PC-9 (cell line): ENCODE measurements at regions of chr5 and their contacts with region 1.

Region 1: GRCh38 chr5:106435185-106435584 is 1235.6 kb downstream of the EFNA5 start:
- DNase-seq: no peak
- H3K4me3 ChIP-seq: no peak overlapping the region
- H3K27ac ChIP-seq: no peak overlapping the region
- H3K4me1 ChIP-seq: no peaks in the 10 kb centered on the region
- H3K27me3 ChIP-seq: no peaks in the 10 kb centered on the region
- CTCF ChIP-seq: no peak

Region 2: DNA sequence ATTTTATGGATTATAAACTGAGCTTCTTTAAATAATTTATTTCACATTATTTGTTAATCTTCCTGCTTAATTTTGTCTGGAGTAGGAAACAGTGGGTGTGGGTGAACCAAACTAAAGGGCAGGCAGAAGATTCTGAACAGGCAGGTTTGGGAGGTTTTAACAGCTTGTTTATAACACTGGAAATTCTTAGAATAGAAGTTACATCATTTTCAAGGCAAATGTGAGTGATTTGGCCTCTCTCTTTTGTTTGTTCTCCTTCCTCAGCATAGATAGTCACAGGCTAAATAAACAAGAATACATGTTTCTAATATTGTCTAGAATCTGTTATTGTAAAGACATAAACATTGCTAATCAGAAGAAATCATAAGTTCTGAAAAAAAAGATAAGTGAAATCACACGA is 1901.7 kb before region 1 on chr5:
- CTCF ChIA-PET with region 1: interaction called, 14 read pairs
- POLR2A ChIA-PET with region 1: no interaction called
- intact Hi-C with region 1: no loop called
- DNase-seq: peak in 1 of 2 experiments; percentile 49
- H3K4me3 ChIP-seq: no peak overlapping the region
- H3K27ac ChIP-seq: peak overlapping the region; percentile 55
- H3K4me1 ChIP-seq: peaks cover 17% of the 10 kb centered on the region
- H3K27me3 ChIP-seq: no peaks in the 10 kb centered on the region
- CTCF ChIP-seq: no peak

Region 3: DNA sequence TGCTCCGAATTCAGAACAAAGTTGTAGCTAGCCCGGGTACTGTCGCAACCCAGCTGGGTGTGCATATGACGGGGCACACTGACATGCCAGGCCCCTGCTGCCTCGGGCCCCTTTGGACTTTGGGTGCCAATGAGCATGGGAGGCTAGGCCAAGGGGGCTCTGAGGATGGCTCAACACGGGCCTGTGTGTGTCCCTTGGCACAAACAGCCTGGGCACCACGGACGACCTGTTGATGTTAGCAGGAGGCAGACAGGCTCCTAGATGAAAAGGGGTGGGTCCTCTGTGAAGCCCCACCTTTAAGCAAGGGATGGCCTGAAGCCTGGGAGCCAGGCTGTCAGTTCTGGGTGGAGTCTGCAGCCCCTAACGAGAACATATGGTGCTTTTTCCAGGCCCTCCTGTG is 452.7 kb before region 1 on chr5:
- CTCF ChIA-PET with region 1: no interaction called
- POLR2A ChIA-PET with region 1: no interaction called
- intact Hi-C with region 1: no loop called
- DNase-seq: no peak
- H3K4me3 ChIP-seq: no peak overlapping the region
- H3K27ac ChIP-seq: no peak overlapping the region
- H3K4me1 ChIP-seq: 0 out of 2 replicates have a peak, but pooled peaks cover 5% of the 10 kb centered on the region
- H3K27me3 ChIP-seq: no peaks in the 10 kb centered on the region
- CTCF ChIP-seq: no peak

Region 4: DNA sequence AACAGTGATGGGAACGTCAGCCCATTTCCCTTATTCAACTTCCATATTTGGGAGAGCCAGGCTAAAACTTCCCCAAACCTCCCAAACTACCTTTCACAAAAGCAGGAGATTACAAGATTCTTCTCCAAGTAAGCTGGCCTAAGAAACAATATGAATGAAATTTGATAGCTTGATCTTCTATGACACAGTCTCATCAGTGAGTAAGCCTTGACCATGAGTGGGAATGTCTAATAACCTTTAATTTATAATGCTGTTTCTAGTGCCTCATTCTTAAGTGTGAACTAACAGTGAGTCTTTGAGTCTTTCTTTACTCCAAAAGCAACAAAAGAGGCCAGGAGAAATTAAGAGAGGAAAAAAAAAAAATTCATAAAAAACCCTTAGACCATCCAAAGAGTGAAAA is 144.3 kb before region 1 on chr5:
- CTCF ChIA-PET with region 1: no interaction called
- POLR2A ChIA-PET with region 1: no interaction called
- intact Hi-C with region 1: no loop called
- DNase-seq: no peak
- H3K4me3 ChIP-seq: no peak overlapping the region
- H3K27ac ChIP-seq: no peak overlapping the region
- H3K4me1 ChIP-seq: no peaks in the 10 kb centered on the region
- H3K27me3 ChIP-seq: no peaks in the 10 kb centered on the region
- CTCF ChIP-seq: no peak

Region 5: DNA sequence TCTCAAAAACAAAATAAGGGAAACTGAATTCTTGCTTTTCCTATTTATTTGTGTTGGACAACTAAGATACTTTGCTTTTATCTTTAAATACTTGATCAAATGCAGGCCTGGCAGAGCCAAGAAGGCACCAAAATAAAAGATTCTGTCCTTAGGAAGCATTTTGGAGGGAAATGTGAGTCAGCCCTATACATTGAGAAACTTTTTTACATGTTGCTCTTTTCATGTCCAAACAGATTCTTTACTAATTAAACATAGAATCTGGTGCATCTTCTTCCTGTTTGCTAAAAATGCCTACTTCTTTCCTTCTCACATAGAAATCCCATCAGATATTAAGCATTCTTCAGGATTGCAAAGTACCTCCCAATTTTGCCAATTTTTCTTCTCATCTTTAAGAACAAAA is 75.1 kb after region 1 on chr5:
- CTCF ChIA-PET with region 1: no interaction called
- POLR2A ChIA-PET with region 1: no interaction called
- intact Hi-C with region 1: no loop called
- DNase-seq: no peak
- H3K4me3 ChIP-seq: no peak overlapping the region
- H3K27ac ChIP-seq: no peak overlapping the region
- H3K4me1 ChIP-seq: no peaks in the 10 kb centered on the region
- H3K27me3 ChIP-seq: no peaks in the 10 kb centered on the region
- CTCF ChIP-seq: no peak

Region 6: DNA sequence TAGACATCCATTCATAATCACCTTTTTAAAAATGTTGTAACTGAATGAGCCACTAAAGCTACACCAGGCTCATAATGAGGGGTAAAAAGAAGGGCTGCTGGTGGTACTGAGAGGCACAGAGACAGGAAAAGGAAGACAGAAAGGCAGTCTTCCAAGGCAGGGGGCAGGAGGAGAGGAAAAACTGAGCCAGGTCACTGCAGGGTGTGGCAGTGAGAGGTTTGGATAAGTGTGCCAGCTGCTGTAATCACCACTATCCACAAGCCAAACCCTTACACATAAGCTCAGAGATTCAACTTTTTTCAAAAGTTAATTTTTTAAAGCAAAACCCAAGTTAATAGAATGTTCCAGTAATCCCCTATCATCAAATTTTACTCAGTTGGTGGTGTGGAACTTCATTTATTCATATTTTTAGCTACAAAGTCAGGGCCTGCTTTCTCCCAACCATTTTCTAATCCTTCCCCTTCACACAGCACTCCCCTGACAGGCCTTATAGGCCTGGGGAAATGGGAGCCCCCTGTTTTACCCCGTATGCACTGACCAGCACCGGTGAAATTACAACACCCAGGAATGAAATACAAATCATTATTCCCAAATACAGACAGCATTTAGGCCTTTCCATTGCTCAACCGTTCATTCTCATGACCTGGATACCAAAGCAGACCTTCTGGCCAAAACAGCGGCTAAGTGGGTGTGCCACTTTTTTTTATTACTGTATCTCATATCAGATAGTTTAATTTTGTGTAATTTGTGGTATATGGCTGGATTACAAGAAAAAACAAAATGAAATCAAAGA is 1159.3 kb after region 1 on chr5:
- CTCF ChIA-PET with region 1: no interaction called
- POLR2A ChIA-PET with region 1: no interaction called
- intact Hi-C with region 1: no loop called
- DNase-seq: no peak
- H3K4me3 ChIP-seq: no peak overlapping the region
- H3K27ac ChIP-seq: peak overlapping the region; percentile 14; the same call in 1 of the 2 replicates
- H3K4me1 ChIP-seq: peaks cover 9% of the 10 kb centered on the region
- H3K27me3 ChIP-seq: no peaks in the 10 kb centered on the region
- CTCF ChIP-seq: no peak